GM10248 (cell line): ENCODE measurements at regions of chr1 and their contacts with region 1.

Region 1: GRCh38 chr1:6245086-6245868 is 1.3 kb downstream of the HES3 start:
- DNase-seq: peak; percentile 90
- CTCF ChIP-seq: peak; percentile 83

Region 2: GRCh38 chr1:6094801-6095505 is 150.3 kb before region 1 on chr1:
- CTCF ChIA-PET with region 1: no interaction called
- POLR2A ChIA-PET with region 1: no interaction called
- DNase-seq: no peak
- CTCF ChIP-seq: no peak

Region 3: DNA sequence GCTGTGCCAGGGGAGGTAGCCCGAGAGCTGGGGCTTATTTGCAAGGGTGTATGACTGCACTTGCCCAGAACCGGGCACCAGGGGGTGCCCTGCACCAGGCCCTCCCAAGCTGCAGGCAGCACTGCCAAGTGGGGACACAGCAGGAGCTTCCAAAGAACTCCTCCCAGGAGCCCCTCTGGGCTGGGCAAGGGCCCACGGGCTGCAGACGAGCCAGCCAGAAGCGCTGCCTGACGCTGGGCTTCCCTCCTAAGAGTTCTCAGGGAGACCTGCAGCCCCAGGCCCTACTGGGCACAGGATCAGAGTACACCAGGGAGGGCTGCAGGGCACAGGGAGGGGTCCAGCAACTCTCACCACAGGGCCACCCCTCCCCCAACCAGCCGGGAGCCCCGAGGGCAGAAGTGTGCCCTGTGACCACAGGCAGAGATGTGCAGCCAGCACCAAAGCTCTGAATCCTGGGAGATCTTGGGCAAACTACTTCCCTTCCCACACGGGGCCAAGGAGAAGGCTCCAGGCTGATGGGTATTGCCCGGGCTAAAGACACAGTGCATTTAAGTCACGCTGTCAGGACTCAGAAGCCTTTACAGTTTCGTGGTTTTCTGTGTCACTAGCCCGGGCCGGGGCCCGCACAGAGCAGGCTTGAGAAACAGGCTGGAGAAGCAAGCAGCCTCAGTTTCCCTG is 136.2 kb before region 1 on chr1:
- CTCF ChIA-PET with region 1: interaction called, 21 read pairs
- POLR2A ChIA-PET with region 1: interaction called, 6 read pairs
- DNase-seq: peak; percentile 74
- CTCF ChIP-seq: peak; percentile 49

Region 4: DNA sequence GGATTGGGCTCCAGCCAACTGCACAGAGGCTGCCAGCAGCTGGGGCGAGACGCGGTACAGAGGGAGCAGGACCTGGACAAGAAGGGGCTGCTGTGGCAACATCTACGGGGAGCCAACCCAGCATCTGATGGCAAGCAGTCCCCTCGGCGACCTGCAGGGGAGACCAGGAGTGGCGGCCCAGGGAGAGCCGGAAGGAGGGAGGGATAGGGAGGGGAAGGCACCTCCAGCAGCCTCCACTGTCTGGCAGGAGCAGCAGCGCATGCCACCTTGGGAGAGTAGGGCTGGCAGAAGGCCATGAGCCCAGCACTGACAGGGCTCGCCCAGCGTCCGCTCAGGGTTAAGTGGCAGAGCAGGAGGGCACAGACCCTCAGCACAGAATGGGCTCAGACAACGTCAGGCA is 82.5 kb before region 1 on chr1:
- CTCF ChIA-PET with region 1: no interaction called
- POLR2A ChIA-PET with region 1: no interaction called
- DNase-seq: no peak
- CTCF ChIP-seq: no peak

Region 5: GRCh38 chr1:6343506-6344405 is 98.5 kb after region 1 on chr1:
- CTCF ChIA-PET with region 1: interaction called, 272 read pairs
- POLR2A ChIA-PET with region 1: no interaction called
- DNase-seq: peak; percentile 80
- CTCF ChIP-seq: peak; percentile 93

Region 6: GRCh38 chr1:6385488-6386191 is 140.4 kb after region 1 on chr1:
- CTCF ChIA-PET with region 1: interaction called, 10 read pairs
- POLR2A ChIA-PET with region 1: no interaction called
- DNase-seq: no peak
- CTCF ChIP-seq: no peak

Region 7: GRCh38 chr1:6408023-6408422 is 162.7 kb after region 1 on chr1:
- CTCF ChIA-PET with region 1: interaction called, 30 read pairs
- POLR2A ChIA-PET with region 1: no interaction called
- DNase-seq: no peak
- CTCF ChIP-seq: no peak

Region 8: DNA sequence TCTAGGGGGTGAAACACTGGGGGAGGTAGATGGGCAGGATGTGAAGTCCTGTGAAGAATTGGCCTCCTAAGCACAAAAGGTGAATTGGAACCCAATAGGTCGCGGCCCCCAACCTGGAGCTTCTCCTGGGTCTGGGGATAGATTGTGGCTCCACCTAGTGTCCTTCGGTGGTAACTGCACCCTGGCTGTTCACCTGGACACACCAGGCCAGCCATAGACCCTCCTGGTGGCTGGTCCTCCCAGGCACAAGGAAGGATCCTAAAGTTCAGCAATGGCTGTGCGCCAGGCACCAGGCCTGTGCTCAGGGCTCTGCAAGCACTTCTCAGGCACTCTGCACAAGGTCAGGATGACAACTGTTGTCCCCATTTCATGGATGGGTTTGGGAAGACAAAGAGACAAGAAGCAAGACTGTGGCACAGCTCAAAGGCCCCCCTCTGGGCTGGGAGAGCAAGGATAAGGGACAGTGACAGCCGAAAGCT is 192.8 kb after region 1 on chr1:
- CTCF ChIA-PET with region 1: interaction called, 20 read pairs
- POLR2A ChIA-PET with region 1: interaction called, 5 read pairs
- DNase-seq: peak; percentile 89
- CTCF ChIP-seq: peak; percentile 97

Region 9: DNA sequence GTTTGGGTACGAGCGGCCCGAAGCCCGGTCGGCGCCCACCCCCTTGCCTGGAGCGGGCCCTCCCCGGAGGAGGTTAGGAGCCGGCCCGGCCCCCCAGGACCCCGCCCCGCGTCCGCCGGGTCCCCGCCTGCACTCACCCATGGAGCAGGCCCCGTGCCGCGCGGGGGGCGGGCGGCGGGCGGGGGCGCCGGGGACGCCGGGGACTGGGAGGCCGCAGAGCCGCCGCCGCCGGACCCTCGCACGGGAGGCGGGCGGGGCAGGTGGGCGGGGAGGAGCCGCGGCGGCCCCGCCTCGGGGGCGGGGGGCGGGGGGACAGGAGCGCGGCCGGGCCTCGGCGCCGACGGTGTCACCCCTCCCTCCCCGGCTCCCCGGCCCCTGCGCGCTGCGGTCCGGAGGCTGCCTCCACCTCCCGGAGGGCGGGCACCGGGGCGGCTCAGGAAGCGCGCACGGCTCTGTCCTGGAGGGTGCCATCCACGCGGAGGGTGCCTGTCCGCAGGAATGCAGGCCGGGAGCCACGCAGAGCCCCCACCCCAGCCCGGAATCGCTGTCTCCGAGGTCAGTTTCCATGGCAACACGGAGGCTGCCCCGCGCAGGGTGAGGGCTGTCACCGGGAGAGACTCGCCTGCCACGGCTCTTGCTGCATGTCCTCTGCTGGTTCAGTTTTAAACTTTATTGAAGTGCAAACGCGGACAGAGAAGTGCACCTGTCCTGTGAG is 252.1 kb after region 1 on chr1:
- CTCF ChIA-PET with region 1: no interaction called
- POLR2A ChIA-PET with region 1: no interaction called
- DNase-seq: peak; percentile 67
- CTCF ChIP-seq: no peak